ENCODE measurements at regions of chr7 and their contacts with region 1.

Region 1: GRCh38 chr7:40604601-40605438 is 470.0 kb downstream of the SUGCT start:
- DNase-seq: peak in 3 of 9 experiments; percentile 4 to 20 (median 7)
- ATAC-seq: no peak
- H3K4me3 ChIP-seq: no peak overlapping the region
- H3K4me3 Mint-ChIP-seq: no peak overlapping the region
- H3K27ac ChIP-seq: no peak overlapping the region
- H3K27ac Mint-ChIP-seq: no peak overlapping the region
- H3K4me1 ChIP-seq: peaks cover 2% of the 10 kb centered on the region
- H3K4me1 Mint-ChIP-seq: no peaks in the 10 kb centered on the region
- H3K27me3 ChIP-seq: no peaks in the 10 kb centered on the region
- H3K27me3 Mint-ChIP-seq: peaks cover 3% of the 10 kb centered on the region
- CTCF ChIP-seq: peak; percentile 23

Region 2: DNA sequence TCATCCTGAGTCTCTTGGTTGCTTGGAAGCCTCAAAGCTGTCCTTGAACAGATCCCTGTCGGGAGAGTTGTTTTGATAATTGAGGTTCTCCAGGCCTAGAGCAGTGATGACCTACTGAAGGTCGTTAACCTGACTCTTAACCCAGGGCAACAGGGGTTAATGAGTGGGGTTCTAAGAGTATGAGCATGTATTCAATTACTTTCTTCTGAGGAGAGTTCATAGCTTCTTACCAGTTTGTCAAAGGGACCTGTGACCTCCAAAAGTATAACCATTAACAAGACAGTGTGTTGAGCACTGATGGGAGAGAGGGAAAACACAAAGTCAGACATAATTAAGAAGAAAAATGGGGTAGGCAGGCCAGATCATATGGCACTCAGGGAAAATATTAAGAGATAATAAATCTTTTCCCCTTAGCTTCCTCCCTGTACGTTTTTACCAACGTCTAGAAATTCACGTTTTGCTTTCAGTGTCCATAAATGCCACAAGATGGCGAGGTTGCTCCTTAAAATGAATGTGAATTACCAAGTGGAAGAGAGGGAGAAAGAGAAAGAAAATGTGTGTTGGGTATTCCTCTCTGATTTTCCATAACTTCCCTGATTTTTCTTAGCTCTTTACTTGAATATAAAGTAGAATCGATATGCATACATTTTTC is 372.5 kb before region 1 on chr7:
- CTCF ChIA-PET with region 1: interaction called, 8 read pairs
- POLR2A ChIA-PET with region 1: no interaction called
- intact Hi-C with region 1: loop called (anchors 2 to 10 kb)
- DNase-seq: peak in 2 of 9 experiments; percentile 20 to 42
- ATAC-seq: no peak
- H3K4me3 ChIP-seq: no peak overlapping the region
- H3K4me3 Mint-ChIP-seq: no peak overlapping the region
- H3K27ac ChIP-seq: no peak overlapping the region
- H3K27ac Mint-ChIP-seq: no peak overlapping the region
- H3K4me1 ChIP-seq: peaks cover 7% of the 10 kb centered on the region
- H3K4me1 Mint-ChIP-seq: peaks cover 6% of the 10 kb centered on the region
- H3K27me3 ChIP-seq: no peaks in the 10 kb centered on the region
- H3K27me3 Mint-ChIP-seq: no peaks in the 10 kb centered on the region
- CTCF ChIP-seq: peak; percentile 22

Region 3: GRCh38 chr7:40329601-40330153 is 275.1 kb before region 1 on chr7:
- CTCF ChIA-PET with region 1: no interaction called
- POLR2A ChIA-PET with region 1: no interaction called
- intact Hi-C with region 1: loop called (anchors 5 to 10 kb)
- DNase-seq: peak in 2 of 9 experiments; percentile 28 to 38
- ATAC-seq: no peak
- H3K4me3 ChIP-seq: no peak overlapping the region
- H3K4me3 Mint-ChIP-seq: no peak overlapping the region
- H3K27ac ChIP-seq: no peak overlapping the region
- H3K27ac Mint-ChIP-seq: no peak overlapping the region
- H3K4me1 ChIP-seq: no peaks in the 10 kb centered on the region
- H3K4me1 Mint-ChIP-seq: no peaks in the 10 kb centered on the region
- H3K27me3 ChIP-seq: no peaks in the 10 kb centered on the region
- H3K27me3 Mint-ChIP-seq: no peaks in the 10 kb centered on the region
- CTCF ChIP-seq: peak; percentile 86

Region 4: GRCh38 chr7:40348124-40348728 is 256.6 kb before region 1 on chr7:
- CTCF ChIA-PET with region 1: no interaction called
- POLR2A ChIA-PET with region 1: no interaction called
- intact Hi-C with region 1: no loop called
- DNase-seq: no peak
- ATAC-seq: no peak
- H3K4me3 ChIP-seq: no peak overlapping the region
- H3K4me3 Mint-ChIP-seq: no peak overlapping the region
- H3K27ac ChIP-seq: no peak overlapping the region
- H3K27ac Mint-ChIP-seq: no peak overlapping the region
- H3K4me1 ChIP-seq: no peaks in the 10 kb centered on the region
- H3K4me1 Mint-ChIP-seq: no peaks in the 10 kb centered on the region
- H3K27me3 ChIP-seq: no peaks in the 10 kb centered on the region
- H3K27me3 Mint-ChIP-seq: no peaks in the 10 kb centered on the region
- CTCF ChIP-seq: no peak